Naive thymus-derived CD8-positive, alpha-beta T cell (primary cell): ENCODE measurements at regions of chr1 and their contacts with region 1.

Region 1: GRCh38 chr1:168535536-168535935 is 8.3 kb downstream of the XCL2 start:
- DNase-seq: peak in 5 of 10 donors; percentile 29 to 69 (median 61)
- ATAC-seq: peak; percentile 87 to 90
- H3K4me3 Mint-ChIP-seq: peak overlapping the region; percentile 63 to 85 (median 77)
- H3K27ac Mint-ChIP-seq: peak overlapping the region; percentile 82 to 97 (median 86)
- H3K4me1 Mint-ChIP-seq: peaks cover 45 to 94% (median 89%) of the 10 kb centered on the region in 4 donors
- H3K27me3 Mint-ChIP-seq: no peaks in the 10 kb centered on the region

Region 2: DNA sequence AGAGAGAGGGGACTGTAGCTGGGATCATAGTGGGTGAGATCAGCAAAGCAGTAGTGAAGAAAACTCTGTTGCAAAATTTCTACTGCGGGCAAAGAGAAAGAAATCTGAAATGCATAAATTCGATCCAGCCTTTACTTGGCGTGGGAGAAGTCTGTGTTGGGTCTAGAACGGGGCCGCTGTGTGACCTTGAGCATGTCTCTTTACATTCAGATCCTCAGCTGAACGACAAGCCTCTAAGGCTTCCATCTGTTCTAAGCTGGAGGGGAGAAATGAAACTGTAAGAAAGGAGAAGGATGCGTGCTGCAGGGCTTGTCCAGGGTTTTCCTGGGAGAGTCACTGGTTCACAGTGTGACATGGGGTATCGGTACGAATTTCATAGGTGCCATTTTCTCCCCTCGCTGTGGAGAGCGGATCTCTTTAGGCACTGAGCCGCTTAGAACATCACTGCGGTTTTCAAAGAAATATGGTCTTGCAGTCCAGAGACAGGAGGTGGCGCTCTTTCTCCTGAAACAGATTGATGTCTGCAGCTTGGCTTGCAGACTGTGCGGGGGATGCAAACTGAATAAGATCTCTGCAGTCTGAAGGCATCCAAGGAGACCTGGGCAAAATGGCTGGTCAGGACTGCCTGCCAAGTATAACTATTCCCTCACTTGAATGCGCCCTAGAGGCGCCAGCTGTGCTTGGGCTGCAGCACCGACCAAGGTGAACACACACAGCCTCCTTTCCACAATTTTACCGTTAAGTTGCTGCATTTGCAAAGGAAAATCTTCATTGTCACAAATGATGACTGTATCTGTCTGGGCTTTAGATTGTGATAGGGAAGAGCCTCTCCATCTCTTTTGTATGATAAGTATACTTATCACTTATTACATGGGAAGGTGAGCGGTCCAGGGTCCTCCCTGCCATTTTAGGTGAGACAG is 95.8 kb before region 1 on chr1:
- POLR2A ChIA-PET with region 1: interaction called, 19 read pairs
- DNase-seq: peak; percentile 58 to 92 (median 84)
- ATAC-seq: peak; percentile 79 to 92
- H3K4me3 Mint-ChIP-seq: peak overlapping the region; percentile 72 to 91 (median 85)
- H3K27ac Mint-ChIP-seq: peak overlapping the region; percentile 63 to 95 (median 88)
- H3K4me1 Mint-ChIP-seq: peaks cover 44 to 62% (median 55%) of the 10 kb centered on the region in 4 donors
- H3K27me3 Mint-ChIP-seq: no peaks in the 10 kb centered on the region

Region 3: DNA sequence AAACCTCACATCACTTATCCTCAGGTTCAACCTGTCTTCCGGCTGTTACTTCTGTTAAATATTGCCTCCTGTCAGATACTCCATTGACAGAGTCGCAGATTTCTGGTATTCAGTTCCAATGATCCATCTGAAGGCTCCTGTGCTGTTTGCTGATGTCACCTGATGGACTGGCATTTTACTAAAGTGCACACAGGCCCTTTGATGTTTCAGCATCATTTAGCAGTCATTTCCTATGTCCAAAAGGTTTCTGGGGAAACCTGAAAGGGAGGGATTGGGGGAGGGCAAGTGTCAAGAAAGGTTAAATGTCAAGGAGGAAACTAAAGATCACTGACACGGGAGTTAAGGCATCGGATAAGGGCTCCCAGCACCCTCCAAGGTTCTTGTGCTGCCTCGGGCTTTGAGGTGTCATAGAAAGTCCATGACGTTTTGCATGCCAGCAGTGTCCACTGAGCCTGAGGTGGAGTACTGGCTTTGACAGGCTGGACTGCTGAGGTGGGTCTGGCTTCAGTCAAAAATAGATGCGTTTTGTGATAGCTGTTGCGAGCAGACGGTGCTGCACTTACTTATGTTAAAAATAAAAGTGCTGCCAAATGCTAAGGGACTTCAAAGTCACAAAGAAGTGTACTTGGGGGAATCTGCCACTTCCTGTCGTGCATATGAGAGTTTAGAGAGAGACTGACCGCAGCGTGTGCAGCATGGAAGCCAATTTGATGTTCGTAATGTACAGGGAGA is 22.5 kb before region 1 on chr1:
- POLR2A ChIA-PET with region 1: interaction called, 19 read pairs
- DNase-seq: peak in 8 of 10 donors; percentile 18 to 71 (median 54)
- ATAC-seq: peak; percentile 83 to 84
- H3K4me3 Mint-ChIP-seq: peak overlapping the region; percentile 61 to 90 (median 78)
- H3K27ac Mint-ChIP-seq: peak overlapping the region; percentile 85 to 96 (median 90)
- H3K4me1 Mint-ChIP-seq: peaks cover 55 to 80% (median 77%) of the 10 kb centered on the region in 4 donors
- H3K27me3 Mint-ChIP-seq: no peaks in the 10 kb centered on the region

Region 4: DNA sequence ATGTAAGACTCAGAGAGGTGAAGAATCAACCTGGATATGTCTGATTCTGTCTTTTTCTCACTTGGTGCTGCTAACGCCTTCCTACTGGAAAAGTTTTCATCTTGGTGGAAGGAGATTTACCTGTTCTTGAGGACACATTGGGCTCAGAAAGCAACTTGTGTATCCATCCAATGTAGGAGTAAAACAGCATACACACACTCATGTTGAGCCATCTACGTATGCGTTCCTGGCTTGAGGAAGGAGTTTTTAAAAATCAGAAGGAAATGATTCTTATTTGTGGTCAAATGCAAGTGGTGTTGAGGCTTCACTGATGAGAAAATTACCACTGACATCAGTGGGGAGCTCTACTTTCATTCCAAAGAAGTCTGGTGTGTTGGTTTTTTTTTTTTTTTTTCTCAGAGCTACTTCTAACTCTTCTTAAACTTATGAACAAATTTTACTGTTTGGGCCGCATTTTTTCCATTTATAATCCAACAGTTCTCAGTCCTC is 17.3 kb before region 1 on chr1:
- POLR2A ChIA-PET with region 1: interaction called, 19 read pairs
- DNase-seq: no peak
- ATAC-seq: no peak
- H3K4me3 Mint-ChIP-seq: peak overlapping the region in 2 of 10 donors; percentile 34
- H3K27ac Mint-ChIP-seq: peak overlapping the region in 4 of 10 donors; percentile 7 to 72 (median 66)
- H3K4me1 Mint-ChIP-seq: peaks cover 52 to 81% (median 77%) of the 10 kb centered on the region in 4 donors
- H3K27me3 Mint-ChIP-seq: no peaks in the 10 kb centered on the region